ENCODE measurements at regions of chr2 and their contacts with region 1.

Region 1: GRCh38 chr2:221397216-221397615 is 174.9 kb downstream of the EPHA4 start:
- DNase-seq: peak; percentile 11
- H3K4me3 ChIP-seq: no peak overlapping the region
- H3K27ac ChIP-seq: no peak overlapping the region
- H3K4me1 ChIP-seq: no peaks in the 10 kb centered on the region
- H3K27me3 ChIP-seq: no peaks in the 10 kb centered on the region
- CTCF ChIP-seq: no peak

Region 2: DNA sequence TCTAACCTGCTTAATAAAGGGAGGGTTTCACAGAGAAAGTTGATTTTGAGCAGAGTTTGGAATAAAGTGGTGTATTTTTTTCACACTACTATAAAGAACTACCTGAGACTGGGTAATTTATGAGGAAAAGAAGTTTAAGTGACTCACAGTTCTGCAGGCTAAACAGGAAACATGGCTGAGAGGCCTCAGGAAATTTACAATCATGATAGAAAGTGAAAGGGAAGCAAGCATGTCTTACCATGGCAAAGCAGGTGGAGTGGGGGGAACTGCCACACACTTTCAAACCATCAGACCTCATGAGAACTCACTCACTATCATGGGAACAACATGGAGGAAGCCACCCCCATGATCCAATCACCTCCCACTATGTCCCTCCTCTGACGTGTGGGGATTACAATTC is 371.8 kb before region 1 on chr2:
- CTCF ChIA-PET with region 1: no interaction called
- dilution Hi-C with region 1: no loop called
- in situ Hi-C with region 1: no loop called
- intact Hi-C with region 1: loop called (anchors 5 kb)
- DNase-seq: peak; percentile 15
- H3K4me3 ChIP-seq: no peak overlapping the region
- H3K27ac ChIP-seq: no peak overlapping the region
- H3K4me1 ChIP-seq: no peaks in the 10 kb centered on the region
- H3K27me3 ChIP-seq: no peaks in the 10 kb centered on the region
- CTCF ChIP-seq: no peak

Region 3: GRCh38 chr2:221444106-221444505 is 46.9 kb after region 1 on chr2:
- CTCF ChIA-PET with region 1: no interaction called
- dilution Hi-C with region 1: no loop called
- in situ Hi-C with region 1: no loop called
- intact Hi-C with region 1: no loop called
- DNase-seq: peak; percentile 56
- H3K4me3 ChIP-seq: no peak overlapping the region
- H3K27ac ChIP-seq: no peak overlapping the region
- H3K4me1 ChIP-seq: peaks cover 8% of the 10 kb centered on the region
- H3K27me3 ChIP-seq: no peaks in the 10 kb centered on the region
- CTCF ChIP-seq: no peak

Measured in mammary epithelial cell (primary cell).